Activated CD8-positive, alpha-beta T cell treated with anti-CD3 and anti-CD28 coated beads for 36 hours (primary cell): ENCODE measurements at regions of chr2 and their contacts with region 1.

Region 1: DNA sequence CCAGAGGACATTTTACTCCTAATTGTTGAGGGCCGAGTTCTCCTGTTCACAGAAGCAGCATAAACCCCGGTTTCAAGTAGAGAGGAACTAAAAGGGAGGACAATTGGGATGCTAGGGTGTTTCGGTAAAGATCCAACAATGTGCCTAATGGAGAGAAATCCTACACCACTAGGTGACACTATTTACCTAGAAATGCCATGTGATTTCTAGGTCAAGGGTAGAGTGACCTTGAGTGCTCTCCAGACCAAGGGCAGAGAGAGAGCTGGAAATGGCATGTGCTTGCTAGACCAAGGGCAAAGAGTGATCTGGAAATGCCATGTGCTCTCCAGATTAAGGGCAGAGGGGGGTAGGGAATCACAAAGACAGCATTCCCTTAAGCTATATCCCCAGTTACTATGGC is 472.0 kb downstream of the DCDC2C start:
- DNase-seq: no peak
- ATAC-seq: no peak
- H3K4me3 Mint-ChIP-seq: no peak overlapping the region
- H3K27ac Mint-ChIP-seq: no peak overlapping the region
- H3K4me1 Mint-ChIP-seq: no peaks in the 10 kb centered on the region
- H3K27me3 Mint-ChIP-seq: no peaks in the 10 kb centered on the region
- CTCF ChIP-seq: no peak

Region 2: GRCh38 chr2:4164236-4164635 is 11.1 kb before region 1 on chr2:
- CTCF ChIA-PET with region 1: no interaction called
- POLR2A ChIA-PET with region 1: no interaction called
- intact Hi-C with region 1: loop called (anchors 1 kb)
- DNase-seq: no peak
- ATAC-seq: no peak
- H3K4me3 Mint-ChIP-seq: no peak overlapping the region
- H3K27ac Mint-ChIP-seq: no peak overlapping the region
- H3K4me1 Mint-ChIP-seq: no peaks in the 10 kb centered on the region
- H3K27me3 Mint-ChIP-seq: no peaks in the 10 kb centered on the region
- CTCF ChIP-seq: no peak